Natural killer cell (primary cell): ENCODE measurements at regions of chr14 and their contacts with region 1.

Region 1: DNA sequence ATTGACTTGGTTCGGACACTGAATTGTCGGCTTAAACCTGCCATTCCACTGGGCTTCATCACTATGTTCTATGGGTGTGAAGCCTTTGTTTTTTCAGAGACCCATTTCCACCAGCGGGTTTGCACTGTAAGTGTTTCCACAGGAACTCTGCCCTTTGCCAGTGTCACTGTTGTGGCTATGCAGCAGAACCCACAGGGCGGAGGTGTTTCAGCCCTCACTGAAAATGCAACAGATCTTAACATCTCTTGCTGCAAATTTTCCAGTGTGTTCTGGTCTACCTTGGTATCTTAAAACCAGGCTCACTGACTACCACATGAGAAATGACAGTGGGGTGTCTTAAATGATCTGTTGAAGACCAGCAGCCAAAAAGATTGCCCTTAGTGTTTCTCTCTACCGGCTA is 21.1 kb downstream of the PRKCH start:
- DNase-seq: peak; percentile 80 to 92
- ATAC-seq: peak; percentile 56 to 87 (median 83)
- H3K4me3 ChIP-seq: peak overlapping the region; percentile 7
- H3K4me3 Mint-ChIP-seq: peak overlapping the region; percentile 92
- H3K27ac ChIP-seq: peak overlapping the region; percentile 90
- H3K27ac Mint-ChIP-seq: peak overlapping the region in 1 of 2 donors; percentile 99
- H3K4me1 ChIP-seq: peaks cover 82% of the 10 kb centered on the region
- H3K4me1 Mint-ChIP-seq: peaks cover 96% of the 10 kb centered on the region in 2 donors
- H3K27me3 ChIP-seq: no peaks in the 10 kb centered on the region
- H3K27me3 Mint-ChIP-seq: no peaks in the 10 kb centered on the region
- CTCF ChIP-seq: no peak

Region 2: GRCh38 chr14:61326847-61327246 is 15.6 kb before region 1 on chr14:
- intact Hi-C with region 1: loop called (anchors 1 kb)
- DNase-seq: peak in 1 of 2 donors; percentile 51
- ATAC-seq: no peak
- H3K4me3 ChIP-seq: peak overlapping the region; percentile 26
- H3K4me3 Mint-ChIP-seq: peak overlapping the region; percentile 95
- H3K27ac ChIP-seq: peak overlapping the region; percentile 83
- H3K27ac Mint-ChIP-seq: peak overlapping the region in 1 of 2 donors; percentile 99
- H3K4me1 ChIP-seq: peaks cover 48% of the 10 kb centered on the region
- H3K4me1 Mint-ChIP-seq: peaks cover 80 to 84% of the 10 kb centered on the region in 2 donors
- H3K27me3 ChIP-seq: no peaks in the 10 kb centered on the region
- H3K27me3 Mint-ChIP-seq: no peaks in the 10 kb centered on the region
- CTCF ChIP-seq: no peak

Region 3: DNA sequence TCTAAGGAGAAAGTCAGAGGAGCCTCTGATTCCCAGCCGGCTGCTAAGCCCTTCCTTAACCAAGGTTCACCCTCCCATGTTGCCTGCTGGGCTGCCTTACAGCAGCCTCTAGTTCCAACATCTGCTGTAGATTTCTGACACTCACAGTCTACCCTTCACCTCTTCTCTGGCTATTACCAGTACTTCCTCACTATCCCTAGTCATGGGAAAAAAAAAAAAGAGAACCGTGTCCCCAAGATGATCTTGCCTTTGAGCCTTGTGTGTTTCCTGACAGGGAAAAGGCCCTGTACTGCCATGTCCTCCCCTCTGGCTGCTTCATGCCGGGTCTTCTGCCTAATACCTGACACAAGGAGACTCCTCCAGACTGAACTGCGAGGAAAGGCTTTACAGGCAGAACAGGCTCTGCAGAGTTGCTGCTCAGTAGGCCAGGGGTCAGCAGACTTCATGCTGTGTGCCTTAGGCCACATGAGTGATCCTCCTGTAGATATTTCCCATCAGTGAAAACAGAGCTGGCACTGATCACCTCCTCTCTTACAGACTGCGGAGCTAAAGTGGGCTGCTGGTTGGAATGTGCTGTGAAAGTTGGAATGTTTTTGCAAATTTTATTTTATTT is 25.7 kb after region 1 on chr14:
- intact Hi-C with region 1: no loop called
- DNase-seq: no peak
- ATAC-seq: no peak
- H3K4me3 ChIP-seq: no peak overlapping the region
- H3K4me3 Mint-ChIP-seq: no peak overlapping the region
- H3K27ac ChIP-seq: peak overlapping the region; percentile 58
- H3K27ac Mint-ChIP-seq: no peak overlapping the region
- H3K4me1 ChIP-seq: peaks cover 64% of the 10 kb centered on the region
- H3K4me1 Mint-ChIP-seq: peaks cover 22 to 30% of the 10 kb centered on the region in 2 donors
- H3K27me3 ChIP-seq: no peaks in the 10 kb centered on the region
- H3K27me3 Mint-ChIP-seq: no peaks in the 10 kb centered on the region
- CTCF ChIP-seq: no peak

Region 4: DNA sequence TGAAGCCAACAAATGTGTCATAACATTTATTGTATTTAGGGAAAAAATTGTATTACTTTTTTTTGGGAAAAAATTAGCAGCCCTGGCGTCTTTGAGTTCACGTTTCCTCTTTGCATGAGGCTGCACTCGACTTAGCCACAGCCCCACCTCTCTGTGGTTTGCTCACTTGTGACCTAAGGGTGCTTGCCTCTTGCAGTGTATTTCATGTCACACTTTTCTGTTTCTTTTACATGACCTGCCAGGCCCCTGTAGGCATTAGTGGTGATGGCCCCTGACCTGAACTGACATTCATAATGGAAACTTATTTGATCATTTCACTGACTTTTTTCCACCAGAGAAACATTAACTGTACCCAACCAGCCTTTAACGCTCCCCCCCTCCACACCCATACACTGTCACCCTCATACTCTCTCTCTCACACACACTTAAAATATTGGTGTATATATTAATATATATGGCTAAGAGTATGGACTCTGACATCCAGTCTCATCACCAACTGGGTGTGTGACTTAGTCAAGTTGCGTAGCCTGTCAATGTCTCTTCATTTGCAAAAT is 101.8 kb after region 1 on chr14:
- intact Hi-C with region 1: loop called (anchors 5 kb)
- DNase-seq: peak; percentile 64 to 85
- ATAC-seq: peak; percentile 87 to 92 (median 87)
- H3K4me3 ChIP-seq: no peak overlapping the region
- H3K4me3 Mint-ChIP-seq: peak overlapping the region; percentile 82
- H3K27ac ChIP-seq: peak overlapping the region; percentile 70
- H3K27ac Mint-ChIP-seq: no peak overlapping the region
- H3K4me1 ChIP-seq: peaks cover 65% of the 10 kb centered on the region
- H3K4me1 Mint-ChIP-seq: peaks cover 94 to 96% of the 10 kb centered on the region in 2 donors
- H3K27me3 ChIP-seq: no peaks in the 10 kb centered on the region
- H3K27me3 Mint-ChIP-seq: no peaks in the 10 kb centered on the region
- CTCF ChIP-seq: no peak

Region 5: DNA sequence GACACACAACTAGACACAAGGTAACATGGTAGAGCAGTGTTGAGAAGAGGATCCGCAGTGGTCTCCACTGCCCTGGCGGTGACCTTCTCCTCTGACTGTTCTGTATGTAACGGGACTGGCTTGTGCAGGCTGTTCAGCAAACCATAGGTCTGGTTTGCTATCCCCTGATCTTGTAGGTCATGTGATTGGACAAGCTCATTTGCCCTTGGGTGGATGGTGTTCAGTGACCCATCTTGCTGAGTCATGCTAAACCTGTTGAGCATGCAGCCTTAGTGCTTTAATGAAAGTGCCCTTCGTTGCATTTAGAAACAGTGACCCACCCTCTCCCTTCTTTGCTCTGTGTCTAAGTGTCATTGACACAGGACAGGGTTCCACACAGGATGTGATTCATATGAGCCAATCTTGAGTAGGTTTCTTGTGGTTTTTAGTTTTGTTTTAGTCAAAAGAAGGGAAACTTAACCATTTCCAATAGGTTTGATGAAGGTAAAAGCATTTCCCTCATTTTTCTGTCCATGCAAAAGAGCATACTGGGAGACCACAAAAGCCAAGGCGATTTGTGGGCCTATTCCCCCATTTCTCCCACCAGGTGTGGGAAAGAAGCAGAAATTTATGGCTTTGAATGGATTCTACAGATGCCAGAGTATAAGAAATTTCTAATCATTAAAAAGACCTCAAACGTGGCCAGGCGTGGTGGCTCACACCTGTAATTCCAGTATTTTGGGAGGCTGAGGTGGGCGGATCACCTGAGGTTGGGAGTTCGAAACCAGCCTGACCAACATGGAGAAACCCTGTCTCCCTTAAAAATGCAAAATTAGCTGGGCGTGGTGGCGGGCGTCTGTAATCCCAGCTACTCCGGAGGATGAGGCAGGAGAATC is 320.2 kb after region 1 on chr14:
- intact Hi-C with region 1: loop called (anchors 10 kb)
- DNase-seq: peak; percentile 40 to 82
- ATAC-seq: peak; percentile 88 to 96 (median 95)
- H3K4me3 ChIP-seq: no peak overlapping the region
- H3K4me3 Mint-ChIP-seq: peak overlapping the region; percentile 76
- H3K27ac ChIP-seq: peak overlapping the region; percentile 84
- H3K27ac Mint-ChIP-seq: peak overlapping the region; percentile 91 to 96
- H3K4me1 ChIP-seq: peaks cover 42% of the 10 kb centered on the region
- H3K4me1 Mint-ChIP-seq: peaks cover 49 to 56% of the 10 kb centered on the region in 2 donors
- H3K27me3 ChIP-seq: no peaks in the 10 kb centered on the region
- H3K27me3 Mint-ChIP-seq: no peaks in the 10 kb centered on the region
- CTCF ChIP-seq: no peak

Region 6: GRCh38 chr14:61977217-61977616 is 634.7 kb after region 1 on chr14:
- intact Hi-C with region 1: no loop called
- DNase-seq: no peak
- ATAC-seq: no peak
- H3K4me3 ChIP-seq: no peak overlapping the region
- H3K4me3 Mint-ChIP-seq: no peak overlapping the region
- H3K27ac ChIP-seq: no peak overlapping the region
- H3K27ac Mint-ChIP-seq: no peak overlapping the region
- H3K4me1 ChIP-seq: no peaks in the 10 kb centered on the region
- H3K4me1 Mint-ChIP-seq: no peaks in the 10 kb centered on the region
- H3K27me3 ChIP-seq: no peaks in the 10 kb centered on the region
- H3K27me3 Mint-ChIP-seq: peaks cover 17 to 30% of the 10 kb centered on the region in 2 donors
- CTCF ChIP-seq: no peak